Activated CD8-positive, alpha-beta memory T cell treated with anti-CD3 and anti-CD28 coated beads, Interleukin-2, amount 10 ng/mL, durations not matched to agents 7 days and 5 days (primary cell): ENCODE measurements at regions of chr9 and their contacts with region 1.

Region 1: GRCh38 chr9:131739980-131740648 is at the start of gene RAPGEF1:
- DNase-seq: peak; percentile 83
- ATAC-seq: peak; percentile 77
- H3K4me3 Mint-ChIP-seq: peak within 1 kb of the TSS; percentile 88
- H3K27ac Mint-ChIP-seq: peak within 1 kb of the TSS; percentile 90
- H3K4me1 Mint-ChIP-seq: peaks cover 52% of the 10 kb centered on the region
- H3K27me3 Mint-ChIP-seq: no peaks in the 10 kb centered on the region
- total RNA-seq, gene RAPGEF1: 187 to 215 TPM

Region 2: DNA sequence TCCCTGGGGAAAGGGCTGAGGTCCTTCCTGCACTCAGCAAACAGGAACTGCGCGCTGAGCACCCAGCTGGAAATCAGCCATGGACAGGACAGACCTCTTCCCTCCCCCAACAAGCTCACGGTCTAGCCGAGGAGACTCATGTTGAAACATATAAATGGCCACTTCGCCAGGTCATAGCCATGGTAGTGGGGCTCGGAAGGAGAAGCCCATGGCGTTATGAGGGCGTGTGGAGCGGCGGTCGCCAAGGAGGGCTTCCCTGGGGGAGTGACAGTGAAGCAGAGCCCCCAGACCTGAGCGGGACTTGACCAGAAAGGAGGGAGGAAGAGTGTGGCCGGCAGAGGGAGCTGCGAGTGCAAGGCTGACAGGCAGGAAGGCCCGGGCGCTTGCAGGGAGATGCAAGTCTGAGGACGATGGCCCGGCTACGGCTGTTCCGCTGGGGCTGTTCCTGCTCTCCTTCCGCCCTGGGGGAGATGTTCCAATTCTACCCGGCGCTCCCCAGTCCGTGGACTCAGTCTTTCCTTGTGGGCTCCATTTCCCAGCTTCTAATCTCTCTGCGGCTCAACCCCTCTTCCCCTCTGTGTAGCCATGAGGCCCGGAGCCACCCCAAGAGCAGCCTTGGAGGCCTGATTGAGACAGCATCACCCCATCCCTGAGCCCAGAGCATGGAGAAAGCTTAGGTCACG is 390.1 kb before region 1 on chr9:
- CTCF ChIA-PET with region 1: interaction called, 10 read pairs
- DNase-seq: peak; percentile 93
- ATAC-seq: peak; percentile 99
- H3K4me3 Mint-ChIP-seq: peak overlapping the region; percentile 11
- H3K27ac Mint-ChIP-seq: peak overlapping the region; percentile 72
- H3K4me1 Mint-ChIP-seq: peaks cover 12% of the 10 kb centered on the region
- H3K27me3 Mint-ChIP-seq: no peaks in the 10 kb centered on the region

Region 3: GRCh38 chr9:131585375-131585774 is 154.7 kb before region 1 on chr9:
- CTCF ChIA-PET with region 1: interaction called, 208 read pairs
- DNase-seq: peak; percentile 85
- ATAC-seq: peak; percentile 84
- H3K4me3 Mint-ChIP-seq: peak overlapping the region; percentile 28
- H3K27ac Mint-ChIP-seq: peak overlapping the region; percentile 92
- H3K4me1 Mint-ChIP-seq: peaks cover 51% of the 10 kb centered on the region
- H3K27me3 Mint-ChIP-seq: no peaks in the 10 kb centered on the region

Region 4: DNA sequence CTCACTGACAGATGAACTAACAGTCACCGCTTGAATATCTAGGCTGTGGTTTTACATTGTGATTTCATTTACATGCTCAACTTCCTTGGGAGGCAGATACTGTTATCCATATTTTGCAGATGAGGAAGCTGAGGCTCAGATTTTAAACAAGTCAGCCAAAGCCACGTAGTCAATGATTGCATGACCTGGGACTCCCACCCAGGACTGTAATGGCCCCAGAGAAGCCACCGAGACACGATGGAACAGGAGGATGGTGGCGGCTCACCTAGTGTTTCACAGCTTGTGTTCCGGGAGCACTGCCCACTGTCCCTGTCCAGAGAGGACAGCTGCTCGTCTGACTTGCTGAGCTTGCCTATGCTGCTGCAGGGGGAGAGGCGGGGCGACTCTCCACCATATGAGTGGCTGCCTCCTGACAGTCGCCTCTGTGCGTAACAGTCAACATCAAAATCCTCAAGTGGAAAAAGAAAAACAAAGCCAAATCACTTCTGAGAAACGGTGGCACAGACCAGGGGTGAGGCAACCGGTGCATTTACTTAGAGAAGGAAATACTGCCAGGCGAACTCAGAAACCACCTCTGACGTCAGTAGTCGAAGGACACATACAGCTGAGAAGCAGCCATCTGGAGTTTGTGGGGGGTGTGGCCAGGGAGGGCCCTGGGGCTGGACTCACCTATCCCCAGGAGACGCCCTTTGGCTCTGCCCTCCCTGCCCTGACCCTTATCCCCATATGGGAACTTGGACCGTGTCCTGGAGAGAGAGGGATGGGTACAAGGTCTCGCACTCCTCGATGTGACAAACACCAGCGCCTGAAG is 112.3 kb before region 1 on chr9:
- CTCF ChIA-PET with region 1: interaction called, 29 read pairs
- DNase-seq: peak; percentile 93
- ATAC-seq: peak; percentile 84
- H3K4me3 Mint-ChIP-seq: peak overlapping the region; percentile 53
- H3K27ac Mint-ChIP-seq: peak overlapping the region; percentile 91
- H3K4me1 Mint-ChIP-seq: peaks cover 82% of the 10 kb centered on the region
- H3K27me3 Mint-ChIP-seq: no peaks in the 10 kb centered on the region

Region 5: GRCh38 chr9:131645078-131645776 is 94.9 kb before region 1 on chr9:
- CTCF ChIA-PET with region 1: interaction called, 16 read pairs
- DNase-seq: peak; percentile 58
- ATAC-seq: peak; percentile 53
- H3K4me3 Mint-ChIP-seq: no peak overlapping the region
- H3K27ac Mint-ChIP-seq: peak overlapping the region; percentile 80
- H3K4me1 Mint-ChIP-seq: peaks cover 58% of the 10 kb centered on the region
- H3K27me3 Mint-ChIP-seq: no peaks in the 10 kb centered on the region

Region 6: DNA sequence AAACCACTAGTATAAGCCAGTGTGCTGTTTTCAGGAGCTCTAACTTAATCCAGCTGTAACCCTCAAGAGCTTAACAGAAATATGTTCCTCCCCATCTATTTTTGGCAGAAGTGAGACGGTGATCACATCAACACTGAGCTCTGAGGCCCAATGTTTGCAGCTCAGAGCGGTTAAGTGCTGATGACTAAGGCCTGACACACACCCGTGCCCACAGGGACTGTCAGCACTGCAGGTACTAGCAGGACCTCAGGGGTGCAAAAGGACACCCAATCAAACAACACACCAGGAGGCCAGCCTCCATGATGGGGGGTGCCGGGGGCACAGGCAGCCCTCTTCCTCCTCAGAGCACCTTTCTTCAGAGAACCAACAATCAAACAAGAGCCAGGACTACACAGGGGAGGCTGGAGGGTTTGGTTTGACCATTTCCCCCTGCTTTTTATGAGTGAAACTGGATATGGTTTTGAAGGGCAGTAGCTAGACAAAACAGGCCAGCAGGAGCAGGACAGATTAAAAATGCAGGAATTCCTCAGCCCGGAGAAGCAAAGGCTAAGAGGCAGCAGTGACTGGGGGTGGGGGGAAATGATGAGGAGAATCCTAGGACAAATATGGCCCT is 61.5 kb before region 1 on chr9:
- CTCF ChIA-PET with region 1: interaction called, 126 read pairs
- DNase-seq: peak; percentile 95
- ATAC-seq: peak; percentile 95
- H3K4me3 Mint-ChIP-seq: peak overlapping the region; percentile 80
- H3K27ac Mint-ChIP-seq: peak overlapping the region; percentile 99
- H3K4me1 Mint-ChIP-seq: peaks cover 77% of the 10 kb centered on the region
- H3K27me3 Mint-ChIP-seq: no peaks in the 10 kb centered on the region